Mammary epithelial cell (primary cell): ENCODE measurements at regions of chr6 and their contacts with region 1.

Region 1: GRCh38 chr6:99868074-99868702 is 125.8 kb downstream of the MCHR2 start:
- DNase-seq: peak; percentile 48
- H3K4me3 ChIP-seq: no peak overlapping the region
- H3K27ac ChIP-seq: no peak overlapping the region
- H3K4me1 ChIP-seq: no peaks in the 10 kb centered on the region
- H3K27me3 ChIP-seq: peaks cover 4% of the 10 kb centered on the region
- CTCF ChIP-seq: peak; percentile 80

Region 2: DNA sequence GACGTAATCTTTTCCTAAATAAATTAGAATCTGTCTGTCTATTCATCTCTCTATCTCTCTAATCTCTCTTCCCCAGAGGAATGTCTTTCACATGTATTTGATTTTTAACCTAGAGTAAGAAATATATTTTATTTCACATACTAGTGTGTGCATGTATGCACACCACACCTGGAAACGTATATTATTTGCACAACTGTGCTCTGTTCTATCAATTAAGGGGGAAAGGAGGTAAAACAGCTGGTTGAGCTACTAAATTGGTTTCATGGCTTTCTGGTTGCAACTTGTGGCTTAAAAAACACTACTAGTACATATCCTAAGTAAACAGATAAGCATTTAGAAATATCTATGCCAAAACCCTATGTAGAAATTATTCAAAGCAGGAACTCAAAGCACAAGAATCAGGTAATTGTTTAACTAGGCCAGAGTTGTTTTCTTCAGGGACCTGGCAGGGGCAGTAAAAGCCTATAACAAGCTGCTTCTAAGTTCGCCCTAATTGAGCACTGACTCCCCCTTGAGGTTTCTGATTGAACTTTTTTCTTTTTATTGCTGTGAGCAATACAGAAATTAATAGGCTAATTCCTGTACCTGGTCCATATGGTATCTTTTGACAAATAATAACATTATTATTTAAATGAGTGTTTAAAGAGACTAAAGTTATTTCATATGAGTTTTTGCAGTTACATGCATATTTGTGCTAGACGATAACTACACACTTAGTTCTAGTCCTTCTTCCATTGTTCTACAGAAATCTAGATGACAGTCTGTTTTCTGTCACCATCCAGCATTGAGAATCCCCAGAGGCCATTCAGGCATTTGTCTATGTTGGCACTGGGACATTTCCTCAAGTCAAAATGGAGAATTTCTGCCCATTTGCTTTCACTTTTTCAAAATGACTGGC is 37.3 kb after region 1 on chr6:
- CTCF ChIA-PET with region 1: no interaction called
- dilution Hi-C with region 1: no loop called
- in situ Hi-C with region 1: no loop called
- intact Hi-C with region 1: loop called (anchors 1 kb)
- DNase-seq: peak; percentile 50
- H3K4me3 ChIP-seq: no peak overlapping the region
- H3K27ac ChIP-seq: no peak overlapping the region
- H3K4me1 ChIP-seq: no peaks in the 10 kb centered on the region
- H3K27me3 ChIP-seq: peaks cover 3% of the 10 kb centered on the region
- CTCF ChIP-seq: peak; percentile 73 to 75

Region 3: DNA sequence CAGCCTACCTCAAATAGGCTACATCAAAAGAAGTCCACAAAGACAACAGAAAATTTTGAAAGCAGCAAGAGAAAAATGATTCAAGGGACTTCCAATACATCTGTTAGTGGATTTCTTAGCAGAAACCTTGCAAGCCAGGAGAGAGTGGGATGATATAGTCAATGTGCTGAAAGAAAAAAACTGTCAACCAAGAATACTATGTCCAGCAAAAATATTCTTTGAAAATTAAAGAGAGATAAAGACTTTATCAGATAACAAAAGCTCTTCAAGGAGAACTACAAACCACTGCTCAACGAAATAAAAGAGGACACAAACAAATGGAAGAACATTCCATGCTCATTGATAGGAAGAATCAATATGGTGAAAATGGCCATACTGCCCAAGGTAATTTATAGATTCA is 91.8 kb after region 1 on chr6:
- CTCF ChIA-PET with region 1: no interaction called
- dilution Hi-C with region 1: no loop called
- in situ Hi-C with region 1: no loop called
- intact Hi-C with region 1: no loop called
- DNase-seq: no peak
- H3K4me3 ChIP-seq: no peak overlapping the region
- H3K27ac ChIP-seq: no peak overlapping the region
- H3K4me1 ChIP-seq: no peaks in the 10 kb centered on the region
- H3K27me3 ChIP-seq: no peaks in the 10 kb centered on the region
- CTCF ChIP-seq: no peak

Region 4: DNA sequence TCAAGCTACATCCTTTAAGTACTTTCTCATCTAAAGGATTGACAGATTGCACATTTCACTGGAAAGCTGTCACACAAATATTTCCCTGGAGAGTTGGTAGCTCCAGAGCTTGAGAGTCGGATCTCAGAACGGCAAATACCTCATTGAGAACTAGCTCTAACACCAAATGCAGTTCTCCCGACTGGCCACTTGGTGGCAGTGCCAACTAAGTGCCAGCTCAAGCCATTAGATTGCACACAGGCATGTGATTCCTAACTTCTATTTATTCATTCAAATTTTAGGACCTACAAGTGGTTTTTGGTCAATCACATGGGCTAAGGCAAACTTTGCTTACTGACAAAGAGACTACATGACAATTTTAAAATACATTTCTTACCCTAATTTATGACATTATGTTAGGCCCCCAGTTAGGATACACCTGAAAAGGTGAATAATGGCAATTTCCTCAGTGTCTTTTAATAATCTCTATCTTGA is 133.8 kb after region 1 on chr6:
- CTCF ChIA-PET with region 1: interaction called, 3 read pairs
- dilution Hi-C with region 1: no loop called
- in situ Hi-C with region 1: no loop called
- intact Hi-C with region 1: loop called (anchors 1 kb)
- DNase-seq: peak; percentile 40
- H3K4me3 ChIP-seq: no peak overlapping the region
- H3K27ac ChIP-seq: no peak overlapping the region
- H3K4me1 ChIP-seq: peaks cover 4% of the 10 kb centered on the region
- H3K27me3 ChIP-seq: no peaks in the 10 kb centered on the region
- CTCF ChIP-seq: peak; percentile 94 to 95

Region 5: GRCh38 chr6:100093405-100093804 is 225.2 kb after region 1 on chr6:
- CTCF ChIA-PET with region 1: no interaction called
- dilution Hi-C with region 1: no loop called
- in situ Hi-C with region 1: loop called (anchors 5 to 10 kb)
- intact Hi-C with region 1: no loop called
- DNase-seq: no peak
- H3K4me3 ChIP-seq: no peak overlapping the region
- H3K27ac ChIP-seq: no peak overlapping the region
- H3K4me1 ChIP-seq: no peaks in the 10 kb centered on the region
- H3K27me3 ChIP-seq: no peaks in the 10 kb centered on the region
- CTCF ChIP-seq: no peak

Region 6: DNA sequence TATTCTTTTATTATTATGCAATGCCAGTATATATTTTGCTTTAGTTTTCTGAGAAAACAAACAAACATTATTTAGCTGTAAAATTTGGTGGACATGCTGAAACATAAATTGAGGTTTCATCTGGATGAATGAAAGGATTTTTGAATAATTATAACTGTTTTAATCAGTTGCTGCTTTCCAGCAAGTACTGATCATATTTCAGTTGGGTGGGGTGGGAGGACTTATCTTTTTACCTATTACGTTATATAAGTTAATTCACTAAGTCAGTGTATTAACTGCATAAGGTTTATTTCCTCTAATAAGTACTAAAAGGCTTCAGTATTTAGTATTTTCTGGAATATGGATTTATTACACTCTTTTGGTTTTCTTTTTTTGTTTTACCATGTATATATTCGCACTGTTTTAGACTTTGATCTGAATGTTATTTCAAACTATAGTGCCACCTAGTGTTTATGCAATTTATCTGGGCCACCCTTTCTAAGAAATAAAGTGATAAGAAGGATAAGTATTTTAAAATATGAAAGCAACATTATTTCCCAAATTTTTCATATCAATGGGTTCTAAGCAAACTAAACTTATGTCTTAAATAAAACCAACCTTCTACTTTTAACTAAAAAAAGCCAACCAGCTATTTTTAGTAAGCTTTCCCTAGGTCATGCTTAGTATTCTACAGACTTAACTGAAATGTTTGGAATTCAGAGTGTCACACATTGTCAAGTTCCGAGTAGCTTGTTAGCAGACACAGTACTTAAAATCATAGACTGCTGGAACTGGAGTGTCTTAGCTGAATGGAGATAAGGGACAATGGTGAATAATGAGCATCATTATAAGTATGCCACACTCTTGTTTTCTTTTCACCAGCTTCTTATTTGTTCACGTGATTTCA is 231.2 kb after region 1 on chr6:
- CTCF ChIA-PET with region 1: no interaction called
- dilution Hi-C with region 1: no loop called
- in situ Hi-C with region 1: loop called (anchors 5 to 10 kb)
- intact Hi-C with region 1: loop called (anchors 1 kb)
- DNase-seq: no peak
- H3K4me3 ChIP-seq: no peak overlapping the region
- H3K27ac ChIP-seq: no peak overlapping the region
- H3K4me1 ChIP-seq: no peaks in the 10 kb centered on the region
- H3K27me3 ChIP-seq: peaks cover 2% of the 10 kb centered on the region
- CTCF ChIP-seq: peak; percentile 55